Prostate gland (tissue), 2 donors: ENCODE measurements at regions of chr10 and their contacts with region 1.

Region 1: GRCh38 chr10:101441541-101442455 is 87.8 kb downstream of the BTRC start:
- DNase-seq: no peak
- H3K4me3 ChIP-seq: no peak overlapping the region
- H3K27ac ChIP-seq: no peak overlapping the region
- H3K4me1 ChIP-seq: peaks cover 2% of the 10 kb centered on the region
- H3K27me3 ChIP-seq: no peaks in the 10 kb centered on the region
- CTCF ChIP-seq: peak in 3 of 4 experiments; percentile 31 to 61 (median 60)
- POLR2A ChIP-seq: no peak

Region 2: DNA sequence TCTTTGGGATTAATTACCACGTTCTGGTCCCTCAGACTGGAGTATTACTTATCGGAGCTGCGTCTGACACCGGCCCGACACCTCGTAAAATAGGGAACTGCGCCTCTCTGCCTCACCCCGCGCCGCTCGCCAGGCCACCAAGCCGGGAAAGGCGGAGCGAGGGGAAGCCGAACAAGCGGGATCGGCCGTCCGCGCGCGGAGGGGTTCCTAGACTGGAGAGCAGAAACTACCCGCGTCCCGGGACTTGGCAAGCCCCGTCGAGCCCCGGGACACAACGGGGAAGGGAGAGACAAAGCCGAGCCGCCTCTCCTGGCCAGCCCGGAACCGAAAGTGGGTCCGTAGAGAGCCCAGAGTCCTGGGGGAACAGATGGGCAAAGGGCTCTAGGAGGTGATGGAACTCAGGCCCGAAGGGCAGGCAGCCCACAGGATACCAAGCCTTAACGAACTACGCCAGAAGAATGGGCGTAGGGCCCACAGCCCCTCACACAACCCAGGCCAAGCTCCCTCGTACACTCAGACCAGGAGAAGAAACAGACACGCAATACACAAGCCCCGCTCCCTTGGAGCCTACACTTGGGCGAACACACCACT is 219.0 kb before region 1 on chr10:
- intact Hi-C with region 1: loop called (anchors 5 kb)
- DNase-seq: no peak
- H3K4me3 ChIP-seq: peak overlapping the region; percentile 1 to 15
- H3K27ac ChIP-seq: no peak overlapping the region
- H3K4me1 ChIP-seq: no peaks in the 10 kb centered on the region
- H3K27me3 ChIP-seq: peaks cover 83% of the 10 kb centered on the region
- CTCF ChIP-seq: no peak
- POLR2A ChIP-seq: no peak

Region 3: DNA sequence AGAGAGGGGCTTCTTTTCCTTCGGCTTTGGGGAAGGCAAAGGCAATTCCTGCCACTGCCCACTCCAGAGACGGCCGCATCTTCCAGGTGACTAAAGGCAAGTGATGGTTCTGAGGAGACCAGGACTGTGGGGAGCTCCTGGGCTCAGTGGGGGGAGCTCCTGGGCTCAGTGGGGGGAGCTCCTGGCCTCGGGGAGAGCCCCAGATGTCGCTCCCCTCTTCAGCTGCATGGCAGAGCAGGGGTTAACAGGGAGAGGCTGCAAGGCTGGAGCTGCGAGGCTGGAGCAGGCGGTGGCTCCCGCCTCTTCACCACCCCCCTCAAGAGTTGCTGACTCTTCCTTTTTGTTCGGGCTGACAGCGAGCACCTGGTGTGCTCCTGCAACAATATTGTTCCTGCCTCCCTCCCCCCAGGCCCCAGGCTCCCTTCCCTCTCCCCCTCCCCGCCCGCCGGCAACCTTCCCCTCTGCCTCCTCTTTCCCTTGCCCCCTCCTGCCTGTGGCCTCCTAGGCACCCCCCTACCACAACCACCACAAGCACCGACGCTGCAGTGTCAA is 156.2 kb before region 1 on chr10:
- intact Hi-C with region 1: no loop called
- DNase-seq: no peak
- H3K4me3 ChIP-seq: no peak overlapping the region
- H3K27ac ChIP-seq: no peak overlapping the region
- H3K4me1 ChIP-seq: peaks cover 5% of the 10 kb centered on the region
- H3K27me3 ChIP-seq: peaks cover 4% of the 10 kb centered on the region
- CTCF ChIP-seq: no peak
- POLR2A ChIP-seq: no peak

Region 4: GRCh38 chr10:101297901-101298486 is 143.8 kb before region 1 on chr10:
- intact Hi-C with region 1: loop called (anchors 5 kb)
- DNase-seq: peak; percentile 39
- H3K4me3 ChIP-seq: no peak overlapping the region
- H3K27ac ChIP-seq: no peak overlapping the region
- H3K4me1 ChIP-seq: no peaks in the 10 kb centered on the region
- H3K27me3 ChIP-seq: no peaks in the 10 kb centered on the region
- CTCF ChIP-seq: peak; percentile 48 to 69 (median 64)
- POLR2A ChIP-seq: no peak